ENCODE measurements at regions of chr1 and their contacts with region 1.

Region 1: GRCh38 chr1:179066471-179066870 is 15.4 kb upstream of the TOR3A start:
- DNase-seq: no peak
- H3K4me3 ChIP-seq: no peak overlapping the region
- H3K27ac ChIP-seq: no peak overlapping the region
- H3K4me1 ChIP-seq: no peaks in the 10 kb centered on the region
- H3K27me3 ChIP-seq: no peaks in the 10 kb centered on the region
- CTCF ChIP-seq: no peak
- EP300 ChIP-seq: no peak
- RAD21 ChIP-seq: no peak

Region 2: DNA sequence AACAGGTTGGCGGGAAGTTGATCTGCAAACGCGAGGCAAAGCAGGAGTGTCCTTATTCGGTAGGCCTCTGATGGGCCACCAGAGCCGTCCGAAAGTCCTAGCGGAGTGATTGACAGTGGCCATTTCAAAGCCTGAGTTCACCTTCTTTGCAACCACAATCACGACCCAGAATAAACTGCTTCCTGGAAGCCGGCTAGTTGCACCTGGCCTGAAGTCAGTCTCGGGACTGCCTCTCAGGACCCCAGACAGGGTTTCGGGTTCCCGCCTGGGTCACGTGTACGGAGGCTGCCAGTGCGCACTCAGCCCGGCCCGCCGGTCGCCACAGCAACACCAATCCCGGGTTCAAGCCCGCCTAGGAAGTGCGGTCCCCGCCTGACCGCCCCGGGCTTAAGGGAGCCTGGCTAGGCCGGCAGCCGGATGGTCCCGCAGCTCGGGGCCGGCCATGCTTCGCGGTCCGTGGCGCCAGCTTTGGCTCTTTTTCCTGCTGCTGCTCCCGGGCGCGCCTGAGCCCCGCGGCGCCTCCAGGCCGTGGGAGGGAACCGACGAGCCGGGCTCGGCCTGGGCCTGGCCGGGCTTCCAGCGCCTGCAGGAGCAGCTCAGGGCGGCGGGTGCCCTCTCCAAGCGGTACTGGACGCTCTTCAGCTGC is 15.3 kb after region 1 on chr1 and contains the start of gene TOR3A:
- CTCF ChIA-PET with region 1: interaction called, 35 read pairs
- POLR2A ChIA-PET with region 1: no interaction called
- DNase-seq: peak; percentile 94
- H3K4me3 ChIP-seq: peak within 1 kb of the TSS; percentile 81 to 84
- H3K27ac ChIP-seq: peak within 1 kb of the TSS; percentile 73
- H3K4me1 ChIP-seq: peaks cover 0 to 13% of the 10 kb centered on the region in 2 experiments; a peak in 1 of 4 replicates
- H3K27me3 ChIP-seq: no peaks in the 10 kb centered on the region
- CTCF ChIP-seq: no peak
- EP300 ChIP-seq: no peak
- RAD21 ChIP-seq: no peak
- polyA plus RNA-seq, gene TOR3A: 29.9 and 33.2 TPM in 2 replicates

Measured in SK-N-SH (cell line).